ENCODE measurements at regions of chr2 and their contacts with region 1.

Region 1: GRCh38 chr2:179031731-179032408 is 18.1 kb downstream of the CCDC141 start:
- DNase-seq: peak; percentile 71
- H3K4me3 Mint-ChIP-seq: peak overlapping the region; percentile 61
- H3K27ac Mint-ChIP-seq: peak overlapping the region; percentile 87
- H3K4me1 Mint-ChIP-seq: peaks cover 32% of the 10 kb centered on the region
- H3K27me3 Mint-ChIP-seq: no peaks in the 10 kb centered on the region

Region 2: DNA sequence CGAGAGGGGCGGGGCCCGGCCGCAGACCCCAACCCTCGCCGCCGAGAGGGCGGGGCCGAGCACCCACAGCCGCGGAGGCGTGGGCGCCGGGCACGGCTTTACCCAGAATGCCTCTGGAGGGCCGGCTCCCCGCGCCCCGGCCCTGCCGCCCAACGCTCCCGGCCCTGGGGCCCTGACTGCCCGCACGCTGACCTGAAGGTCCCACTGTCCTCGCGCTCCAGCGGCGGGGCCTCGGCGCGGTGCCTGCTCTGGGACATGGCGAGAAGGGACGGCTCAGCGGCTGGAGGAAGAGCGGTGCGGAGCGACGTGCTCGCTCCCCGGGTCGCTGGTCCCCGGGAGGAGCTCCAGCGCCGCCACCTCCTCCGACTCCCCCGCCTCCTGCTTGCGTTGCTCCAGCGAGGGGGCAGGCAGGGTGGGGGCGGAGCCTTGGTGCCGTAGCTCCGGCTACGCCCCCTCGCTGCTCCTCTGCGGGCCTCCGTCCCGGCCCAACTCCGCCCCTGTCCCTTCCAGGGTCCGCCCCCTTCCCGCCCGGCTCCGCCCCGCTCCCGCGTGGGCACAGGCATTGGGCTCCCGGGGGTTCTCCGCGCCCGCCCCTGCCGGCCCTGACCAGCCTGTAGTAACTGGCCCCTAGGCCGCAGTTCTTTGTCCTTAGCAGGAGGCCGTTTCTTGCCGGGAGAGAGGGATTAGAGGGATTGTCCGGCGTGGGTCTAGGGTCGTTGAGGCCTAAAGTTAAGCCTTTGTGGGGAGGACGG is 580.9 kb before region 1 on chr2 and contains the starts of genes PJVK and PRKRA:
- CTCF ChIA-PET with region 1: no interaction called
- intact Hi-C with region 1: loop called (anchors 5 kb)
- DNase-seq: peak; percentile 96
- H3K4me3 Mint-ChIP-seq: peak within 1 kb of the TSS; percentile 91
- H3K27ac Mint-ChIP-seq: peak within 1 kb of the TSS; percentile 97
- H3K4me1 Mint-ChIP-seq: peaks cover 27% of the 10 kb centered on the region
- H3K27me3 Mint-ChIP-seq: no peaks in the 10 kb centered on the region
- total RNA-seq, gene PJVK: 2.0 to 2.4 TPM
- total RNA-seq, gene PRKRA: 78.2 to 82.9 TPM

Region 3: DNA sequence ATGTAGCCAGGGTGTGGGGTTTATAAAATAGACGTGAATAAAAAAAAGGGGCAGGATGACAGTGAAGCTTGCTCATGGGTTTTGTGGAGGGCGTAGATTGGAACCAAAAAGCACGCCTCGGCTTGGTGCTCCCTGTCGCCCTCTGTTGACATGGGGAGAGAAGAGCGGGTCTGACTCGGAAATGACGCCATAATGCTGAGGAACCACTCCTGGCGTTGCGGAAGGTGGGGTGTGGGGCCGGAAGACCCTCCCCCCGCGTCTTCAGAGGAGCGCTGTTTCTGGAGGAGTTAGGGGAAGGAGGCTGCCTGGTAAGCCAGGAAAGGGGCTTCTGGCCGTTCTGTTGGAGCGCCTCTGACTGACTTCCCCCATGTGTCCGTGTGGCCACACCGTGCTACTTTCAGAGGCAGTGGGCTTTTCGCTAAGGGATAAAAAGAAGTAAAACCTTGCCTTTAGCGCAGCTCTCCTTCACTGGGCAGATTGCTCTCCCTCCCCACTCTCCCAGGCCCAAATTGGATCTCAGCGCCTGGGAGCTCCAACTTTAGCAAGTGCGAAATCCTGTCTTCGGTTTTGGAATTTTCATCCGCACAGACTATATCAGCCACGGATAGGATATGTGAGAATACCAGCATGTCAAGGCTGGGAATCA is 508.8 kb before region 1 on chr2:
- CTCF ChIA-PET with region 1: no interaction called
- intact Hi-C with region 1: loop called (anchors 1 kb)
- DNase-seq: peak; percentile 92
- H3K4me3 Mint-ChIP-seq: peak overlapping the region; percentile 82
- H3K27ac Mint-ChIP-seq: peak overlapping the region; percentile 87
- H3K4me1 Mint-ChIP-seq: peaks cover 48% of the 10 kb centered on the region
- H3K27me3 Mint-ChIP-seq: no peaks in the 10 kb centered on the region

Region 4: DNA sequence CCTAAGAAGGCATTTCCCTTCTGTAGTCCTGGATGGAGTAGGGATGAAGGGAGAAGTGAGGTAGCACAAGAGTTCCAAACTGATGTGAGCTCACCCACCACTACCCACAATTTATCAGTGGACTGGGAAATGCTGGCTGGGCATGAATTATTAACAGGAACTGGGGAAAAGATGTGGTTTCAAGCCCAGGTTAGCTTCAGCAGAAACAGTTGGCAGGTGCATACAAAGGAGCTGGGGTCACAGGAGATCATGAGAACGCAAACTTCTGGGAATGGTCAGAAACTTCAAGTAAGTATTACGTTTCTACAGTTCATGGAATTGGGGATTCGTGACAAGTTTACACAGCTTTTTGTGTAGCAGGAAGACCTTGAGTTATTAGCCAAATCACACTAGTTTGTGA is 12.6 kb after region 1 on chr2:
- CTCF ChIA-PET with region 1: interaction called, 7 read pairs
- intact Hi-C with region 1: loop called (anchors 1 kb)
- DNase-seq: no peak
- H3K4me3 Mint-ChIP-seq: no peak overlapping the region
- H3K27ac Mint-ChIP-seq: no peak overlapping the region
- H3K4me1 Mint-ChIP-seq: peaks cover 67% of the 10 kb centered on the region
- H3K27me3 Mint-ChIP-seq: no peaks in the 10 kb centered on the region

Region 5: DNA sequence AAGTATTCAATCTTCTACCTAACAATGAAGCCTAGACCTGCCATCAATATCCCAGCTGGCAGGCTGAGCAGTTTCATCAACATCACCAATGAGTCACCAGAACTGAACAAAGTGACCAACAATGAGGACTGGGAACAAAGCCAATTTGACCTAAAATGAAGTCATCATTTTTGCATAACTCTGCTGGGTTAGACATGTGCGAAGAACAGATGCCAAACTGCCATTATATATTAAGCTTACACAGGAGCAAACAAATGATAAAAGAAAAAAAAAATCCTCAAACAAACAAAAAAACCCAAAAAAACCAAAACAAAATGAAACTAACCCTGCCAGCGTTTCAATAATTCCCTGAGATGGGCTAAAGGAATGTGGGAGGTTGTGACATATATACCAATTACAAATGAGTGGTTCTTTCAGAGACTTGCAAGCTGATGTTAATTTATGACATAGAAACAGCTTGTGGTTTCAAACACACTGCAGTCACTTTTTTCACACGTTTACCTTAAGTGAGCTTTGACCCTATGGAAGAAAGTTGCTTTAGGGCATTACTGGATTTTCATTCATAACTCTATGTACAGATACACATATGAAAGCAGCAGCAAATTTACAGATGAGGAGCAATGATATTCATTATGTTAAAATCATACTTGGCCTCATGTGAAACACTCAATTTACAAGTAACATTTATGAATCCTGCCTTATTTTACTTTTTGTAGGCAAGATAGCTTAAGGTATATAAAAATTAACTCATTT is 75.0 kb after region 1 on chr2:
- CTCF ChIA-PET with region 1: no interaction called
- intact Hi-C with region 1: loop called (anchors 1 kb)
- DNase-seq: peak; percentile 21
- H3K4me3 Mint-ChIP-seq: no peak overlapping the region
- H3K27ac Mint-ChIP-seq: no peak overlapping the region
- H3K4me1 Mint-ChIP-seq: peaks cover 30% of the 10 kb centered on the region
- H3K27me3 Mint-ChIP-seq: no peaks in the 10 kb centered on the region

Region 6: GRCh38 chr2:179264368-179265081 is 232.7 kb after region 1 on chr2 and contains the start of gene SESTD1:
- CTCF ChIA-PET with region 1: no interaction called
- intact Hi-C with region 1: loop called (anchors 5 kb)
- DNase-seq: peak; percentile 57
- H3K4me3 Mint-ChIP-seq: peak within 1 kb of the TSS; percentile 80
- H3K27ac Mint-ChIP-seq: peak within 1 kb of the TSS; percentile 27
- H3K4me1 Mint-ChIP-seq: peaks cover 20% of the 10 kb centered on the region
- H3K27me3 Mint-ChIP-seq: peaks cover 30% of the 10 kb centered on the region
- total RNA-seq, gene SESTD1: 11.3 to 12.4 TPM

Region 7: GRCh38 chr2:179842498-179843153 is 810.8 kb after region 1 on chr2:
- CTCF ChIA-PET with region 1: no interaction called
- intact Hi-C with region 1: no loop called
- DNase-seq: peak; percentile 19
- H3K4me3 Mint-ChIP-seq: no peak overlapping the region
- H3K27ac Mint-ChIP-seq: no peak overlapping the region
- H3K4me1 Mint-ChIP-seq: no peaks in the 10 kb centered on the region
- H3K27me3 Mint-ChIP-seq: no peaks in the 10 kb centered on the region

Measured in activated naive CD4-positive, alpha-beta T cell treated with anti-CD3 and anti-CD28 coated beads for 36 hours (primary cell).